Cardiac septum (tissue), 1 donor: ENCODE measurements at regions of chr10 and their contacts with region 1.

Region 1: GRCh38 chr10:10642751-10643150 is 374.9 kb upstream of the CELF2 start:
- DNase-seq: peak; percentile 78

Region 2: DNA sequence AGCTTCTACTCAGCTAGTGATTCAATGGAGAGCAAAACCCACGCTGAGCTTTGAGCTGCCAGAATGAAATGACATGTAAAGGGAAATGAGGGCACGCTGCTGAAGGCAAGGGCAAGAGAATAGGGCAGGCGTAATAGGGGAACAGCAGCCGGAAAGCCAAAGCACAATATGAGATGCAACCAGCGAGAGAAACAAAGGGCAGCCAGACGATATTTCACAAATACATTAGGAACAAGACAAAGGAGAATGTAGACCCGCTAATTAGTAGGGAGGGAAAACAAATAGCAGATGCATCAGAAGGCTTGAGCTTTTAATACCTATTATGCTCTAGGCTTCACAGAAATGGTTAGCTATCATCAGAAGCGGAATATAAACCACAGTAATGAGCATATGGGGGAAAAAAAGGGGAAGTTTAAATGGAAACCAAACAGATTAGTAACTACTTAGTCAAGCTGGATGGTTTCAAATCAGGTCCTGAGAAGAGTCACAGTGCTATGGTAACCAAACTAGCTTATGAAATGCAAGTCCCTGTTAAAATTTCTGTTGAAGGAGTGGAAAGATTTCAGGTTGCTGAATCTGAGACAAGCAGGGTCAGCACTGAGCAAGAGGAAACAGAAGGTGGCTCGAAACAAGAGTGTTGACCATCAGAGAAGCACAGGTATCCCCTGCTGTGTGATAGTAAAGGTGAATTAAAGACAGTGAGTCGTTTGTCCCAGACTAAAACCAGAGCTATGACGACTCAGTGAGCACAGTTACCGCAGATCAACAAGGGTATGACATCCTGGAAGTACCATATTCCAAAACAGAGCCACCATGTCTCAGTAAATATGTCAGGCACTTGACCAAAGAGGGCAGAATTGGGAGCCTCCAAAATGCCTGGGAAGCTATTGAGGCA is 122.0 kb before region 1 on chr10:
- intact Hi-C with region 1: no loop called
- DNase-seq: no peak

Region 3: DNA sequence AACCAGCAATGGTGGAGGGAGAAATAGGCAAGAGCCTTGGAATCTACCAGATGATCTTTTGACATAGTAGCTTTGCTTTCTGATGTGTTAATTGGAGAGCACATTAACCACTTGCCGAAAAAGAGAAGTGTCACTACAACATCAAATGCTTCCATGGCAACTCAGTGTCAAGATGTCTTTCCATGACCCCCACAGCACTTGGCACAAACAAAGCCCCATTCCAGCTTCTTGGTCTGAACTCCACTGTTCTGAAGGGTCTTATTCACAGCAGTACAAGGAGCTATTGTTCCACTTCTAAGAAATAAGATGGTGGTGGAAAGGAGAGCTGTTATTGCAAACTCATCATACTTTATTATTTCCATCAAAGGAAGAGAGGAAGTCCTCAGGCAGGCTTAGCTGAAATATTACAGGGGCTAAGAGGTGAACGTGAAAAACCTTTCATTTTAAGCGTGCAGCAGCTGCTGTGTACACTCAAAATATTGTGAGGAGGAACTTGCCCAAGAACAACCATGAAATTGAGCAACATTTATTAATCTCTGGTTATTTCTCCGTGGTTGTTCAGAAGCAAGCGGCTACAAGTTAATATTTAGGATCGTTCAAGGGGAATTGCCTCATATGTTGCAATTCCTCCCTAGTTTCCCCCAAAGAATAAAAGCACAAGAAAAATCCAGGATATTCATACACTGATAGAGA is 20.1 kb after region 1 on chr10:
- intact Hi-C with region 1: loop called (anchors 2 kb)
- DNase-seq: no peak